ENCODE measurements at regions of chr1 and their contacts with region 1.

Region 1: GRCh38 chr1:160681067-160681890 is 30.3 kb downstream of the CD48 start:
- DNase-seq: peak; percentile 77 to 90 (median 81)
- H3K4me3 ChIP-seq: no peak overlapping the region
- H3K4me3 Mint-ChIP-seq: peak overlapping the region in 4 of 7 donors; percentile 2 to 80 (median 6)
- H3K27ac ChIP-seq: no peak overlapping the region
- H3K27ac Mint-ChIP-seq: peak overlapping the region; percentile 87 to 98 (median 94)
- H3K4me1 ChIP-seq: peaks cover 56% of the 10 kb centered on the region
- H3K4me1 Mint-ChIP-seq: peaks cover 58 to 72% (median 72%) of the 10 kb centered on the region in 3 donors
- H3K27me3 ChIP-seq: no peaks in the 10 kb centered on the region
- H3K27me3 Mint-ChIP-seq: no peaks in the 10 kb centered on the region

Region 2: GRCh38 chr1:160618763-160619274 is 62.5 kb before region 1 on chr1:
- CTCF ChIA-PET with region 1: interaction called, 67 read pairs
- POLR2A ChIA-PET with region 1: no interaction called
- DNase-seq: peak in 4 of 5 donors; percentile 21 to 63 (median 44)
- H3K4me3 ChIP-seq: no peak overlapping the region
- H3K4me3 Mint-ChIP-seq: peak overlapping the region in 1 of 7 donors; percentile 1
- H3K27ac ChIP-seq: no peak overlapping the region
- H3K27ac Mint-ChIP-seq: peak overlapping the region; percentile 3 to 91 (median 63)
- H3K4me1 ChIP-seq: peaks cover 37% of the 10 kb centered on the region
- H3K4me1 Mint-ChIP-seq: peaks cover 62 to 86% (median 75%) of the 10 kb centered on the region in 3 donors
- H3K27me3 ChIP-seq: no peaks in the 10 kb centered on the region
- H3K27me3 Mint-ChIP-seq: no peaks in the 10 kb centered on the region

Region 3: GRCh38 chr1:160711602-160712311 is 30.5 kb after region 1 on chr1 and contains the start of gene CD48:
- CTCF ChIA-PET with region 1: interaction called, 22 read pairs
- POLR2A ChIA-PET with region 1: interaction called, 11 read pairs
- DNase-seq: peak; percentile 27 to 86 (median 78)
- H3K4me3 ChIP-seq: peak within 1 kb of the TSS; percentile 88
- H3K4me3 Mint-ChIP-seq: no peak within 1 kb of the TSS
- H3K27ac ChIP-seq: peak within 1 kb of the TSS; percentile 56
- H3K27ac Mint-ChIP-seq: peak within 1 kb of the TSS in 1 of 8 donors; percentile 89
- H3K4me1 ChIP-seq: peaks cover 70% of the 10 kb centered on the region
- H3K4me1 Mint-ChIP-seq: peaks cover 35 to 49% (median 47%) of the 10 kb centered on the region in 3 donors
- H3K27me3 ChIP-seq: no peaks in the 10 kb centered on the region
- H3K27me3 Mint-ChIP-seq: no peaks in the 10 kb centered on the region
- total RNA-seq, gene CD48: 224 to 234 TPM

Region 4: DNA sequence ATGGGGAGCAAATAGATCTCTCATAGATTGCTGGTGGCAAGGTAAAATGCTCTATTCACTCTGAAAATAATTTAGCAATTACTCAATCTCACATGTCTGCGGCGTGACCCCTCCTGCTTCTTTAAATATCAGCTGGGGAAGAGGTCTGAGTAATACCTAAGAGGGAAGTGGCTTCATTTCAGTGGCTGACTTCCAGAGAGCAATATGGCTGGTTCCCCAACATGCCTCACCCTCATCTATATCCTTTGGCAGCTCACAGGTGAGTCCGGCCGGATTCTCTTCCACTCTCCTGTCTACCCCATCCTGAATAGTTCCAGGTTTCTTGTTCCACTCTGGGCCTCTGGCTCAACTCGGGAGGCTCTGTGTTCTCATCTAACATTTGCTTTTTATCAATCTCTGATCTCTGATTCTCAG is 57.8 kb after region 1 on chr1 and contains the start of gene SLAMF7:
- CTCF ChIA-PET with region 1: interaction called, 10 read pairs
- POLR2A ChIA-PET with region 1: interaction called, 5 read pairs
- DNase-seq: peak in 4 of 5 donors; percentile 31 to 75 (median 46)
- H3K4me3 ChIP-seq: peak within 1 kb of the TSS; percentile 63
- H3K4me3 Mint-ChIP-seq: peak within 1 kb of the TSS; percentile 89 to 98 (median 94)
- H3K27ac ChIP-seq: peak within 1 kb of the TSS; percentile 54
- H3K27ac Mint-ChIP-seq: peak within 1 kb of the TSS; percentile 88 to 98 (median 94)
- H3K4me1 ChIP-seq: peaks cover 37% of the 10 kb centered on the region
- H3K4me1 Mint-ChIP-seq: peaks cover 69 to 73% (median 69%) of the 10 kb centered on the region in 3 donors
- H3K27me3 ChIP-seq: no peaks in the 10 kb centered on the region
- H3K27me3 Mint-ChIP-seq: no peaks in the 10 kb centered on the region
- total RNA-seq, gene SLAMF7: 79.5 to 97.4 TPM

Region 5: GRCh38 chr1:160755911-160756848 is 74.9 kb after region 1 on chr1:
- CTCF ChIA-PET with region 1: interaction called, 15 read pairs
- POLR2A ChIA-PET with region 1: no interaction called
- DNase-seq: peak in 4 of 5 donors; percentile 28 to 76 (median 54)
- H3K4me3 ChIP-seq: no peak overlapping the region
- H3K4me3 Mint-ChIP-seq: peak overlapping the region; percentile 29 to 86 (median 71)
- H3K27ac ChIP-seq: peak overlapping the region; percentile 33
- H3K27ac Mint-ChIP-seq: peak overlapping the region; percentile 88 to 98 (median 95)
- H3K4me1 ChIP-seq: peaks cover 51% of the 10 kb centered on the region
- H3K4me1 Mint-ChIP-seq: peaks cover 71 to 87% (median 81%) of the 10 kb centered on the region in 3 donors
- H3K27me3 ChIP-seq: no peaks in the 10 kb centered on the region
- H3K27me3 Mint-ChIP-seq: peaks cover 0 to 4% of the 10 kb centered on the region in 2 donors